ENCODE measurements at regions of chr6 and their contacts with region 1.

Region 1: DNA sequence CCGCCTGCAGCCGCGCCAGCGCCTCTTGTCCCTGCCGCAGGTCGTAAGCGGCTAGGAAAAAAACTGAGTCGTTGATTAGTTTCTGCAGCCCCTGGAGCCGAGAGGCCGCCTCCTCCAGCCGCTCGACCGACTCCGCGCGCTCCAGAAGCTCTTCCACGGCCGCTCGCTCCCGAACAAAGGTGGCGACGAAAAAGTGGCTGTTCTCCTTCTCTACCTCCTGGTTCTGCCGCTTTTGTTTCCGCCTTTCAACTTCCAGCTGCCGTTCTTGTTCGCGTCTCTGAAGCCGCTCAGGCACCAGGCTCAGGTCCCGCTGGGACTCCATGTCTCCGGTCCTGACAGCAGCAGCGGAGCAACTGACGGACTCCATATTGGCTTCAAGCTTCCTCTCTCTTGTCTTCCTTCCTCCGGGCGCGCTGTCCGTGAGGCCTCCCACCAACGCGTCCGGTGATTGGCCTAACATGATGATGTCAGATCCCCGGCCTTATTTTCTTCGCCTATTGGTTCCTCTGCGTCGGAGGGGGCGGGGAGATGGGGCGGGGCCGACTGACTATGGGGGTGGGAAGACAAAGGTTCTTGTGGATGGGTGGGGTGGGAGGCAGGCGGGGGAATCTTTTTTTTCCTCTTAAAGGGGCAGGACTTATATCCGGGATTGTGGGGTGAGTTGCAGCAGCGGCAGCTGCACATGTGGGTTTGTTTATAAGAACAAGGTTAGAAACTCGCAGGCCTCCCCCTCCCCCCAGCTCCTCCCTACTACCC is at the start of gene TBCC:
- DNase-seq: peak; percentile 99
- ATAC-seq: peak; percentile 84 to 86
- H3K4me3 ChIP-seq: peak within 1 kb of the TSS; percentile 80 to 99 (median 92)
- H3K27ac ChIP-seq: peak within 1 kb of the TSS; percentile 95 to 100 (median 97)
- H3K4me1 ChIP-seq: peaks cover 26 to 29% of the 10 kb centered on the region in 2 donors
- H3K27me3 ChIP-seq: no peaks in the 10 kb centered on the region
- CTCF ChIP-seq: no peak
- POLR2A ChIP-seq: peak; percentile 91 to 97
- total RNA-seq, gene TBCC: 33.2 to 61.8 (median 45.1) TPM

Region 2: DNA sequence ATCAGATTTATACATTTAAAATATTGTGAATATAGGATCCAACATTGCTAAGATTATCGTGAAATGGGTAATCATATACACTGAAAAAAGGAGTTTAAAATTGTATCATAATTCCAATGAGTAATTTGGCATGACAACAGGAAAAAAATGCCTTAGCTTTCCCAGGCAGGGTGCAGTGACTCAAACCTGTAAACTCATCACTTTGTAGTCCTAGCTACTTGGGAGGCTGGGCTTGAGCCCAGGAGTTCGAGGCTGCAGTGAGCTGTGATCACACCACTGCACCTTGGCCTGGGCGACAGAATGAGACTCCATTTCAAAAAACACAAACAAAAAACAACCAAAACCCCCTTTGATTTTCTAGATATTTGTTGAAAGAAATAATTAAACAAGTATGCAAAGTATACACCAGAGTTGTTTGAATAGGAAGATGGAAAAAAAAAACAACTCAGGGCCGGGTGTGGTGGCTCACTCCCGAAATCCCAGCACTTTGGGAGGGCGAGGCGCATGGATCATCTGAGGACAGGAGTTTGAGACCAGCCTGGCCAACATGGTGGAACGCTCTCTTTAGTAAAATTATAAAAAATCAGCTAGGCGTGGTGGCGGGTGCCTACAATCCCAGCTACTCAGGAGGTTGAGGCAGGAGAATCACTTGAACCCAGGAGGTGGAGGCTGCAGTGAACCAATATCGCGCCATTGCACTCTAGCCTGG is 392.9 kb before region 1 on chr6:
- in situ Hi-C with region 1: no loop called
- intact Hi-C with region 1: no loop called
- DNase-seq: no peak
- ATAC-seq: no peak
- H3K4me3 ChIP-seq: no peak overlapping the region
- H3K27ac ChIP-seq: no peak overlapping the region
- H3K4me1 ChIP-seq: no peaks in the 10 kb centered on the region
- H3K27me3 ChIP-seq: no peaks in the 10 kb centered on the region
- CTCF ChIP-seq: no peak
- POLR2A ChIP-seq: no peak

Region 3: GRCh38 chr6:42782622-42783176 is 36.8 kb after region 1 on chr6:
- in situ Hi-C with region 1: loop called in 1 of 4 experiments (anchors 5 kb)
- intact Hi-C with region 1: loop called (anchors 1 kb)
- DNase-seq: peak; percentile 65 to 71
- ATAC-seq: peak; percentile 38 to 55
- H3K4me3 ChIP-seq: peak overlapping the region; percentile 72 to 96 (median 91)
- H3K27ac ChIP-seq: peak overlapping the region; percentile 95 to 100 (median 98)
- H3K4me1 ChIP-seq: peaks cover 27 to 38% of the 10 kb centered on the region in 2 donors
- H3K27me3 ChIP-seq: no peaks in the 10 kb centered on the region
- CTCF ChIP-seq: peak in 1 of 5 experiments; percentile 4
- POLR2A ChIP-seq: peak; percentile 83 to 90

Region 4: GRCh38 chr6:42864602-42865001 is 118.7 kb after region 1 on chr6:
- in situ Hi-C with region 1: loop called in 1 of 4 experiments (anchors 25 kb)
- intact Hi-C with region 1: no loop called
- DNase-seq: no peak
- ATAC-seq: peak in 1 of 2 donors; percentile 21
- H3K4me3 ChIP-seq: no peak overlapping the region
- H3K27ac ChIP-seq: no peak overlapping the region
- H3K4me1 ChIP-seq: no peaks in the 10 kb centered on the region
- H3K27me3 ChIP-seq: no peaks in the 10 kb centered on the region
- CTCF ChIP-seq: no peak
- POLR2A ChIP-seq: no peak

Region 5: GRCh38 chr6:42890311-42891198 is 144.7 kb after region 1 on chr6:
- in situ Hi-C with region 1: no loop called
- intact Hi-C with region 1: loop called (anchors 1 kb)
- DNase-seq: peak; percentile 90 to 94
- ATAC-seq: peak; percentile 98
- H3K4me3 ChIP-seq: peak overlapping the region; percentile 93 to 99 (median 96)
- H3K27ac ChIP-seq: peak overlapping the region; percentile 89 to 99 (median 98)
- H3K4me1 ChIP-seq: peaks cover 13% of the 10 kb centered on the region in 2 donors
- H3K27me3 ChIP-seq: no peaks in the 10 kb centered on the region
- CTCF ChIP-seq: no peak
- POLR2A ChIP-seq: peak; percentile 51 to 70